ENCODE measurements at regions of chr3 and their contacts with region 1.

Region 1: GRCh38 chr3:129490242-129491045 is 38.0 kb upstream of the RHO start:
- DNase-seq: peak; percentile 71
- ATAC-seq: peak; percentile 95
- H3K4me3 Mint-ChIP-seq: no peak overlapping the region
- H3K27ac Mint-ChIP-seq: no peak overlapping the region
- H3K4me1 Mint-ChIP-seq: no peaks in the 10 kb centered on the region
- H3K27me3 Mint-ChIP-seq: no peaks in the 10 kb centered on the region

Region 2: GRCh38 chr3:129383292-129383860 is 107.1 kb before region 1 on chr3:
- CTCF ChIA-PET with region 1: interaction called, 11 read pairs
- DNase-seq: peak; percentile 66
- ATAC-seq: peak; percentile 94
- H3K4me3 Mint-ChIP-seq: no peak overlapping the region
- H3K27ac Mint-ChIP-seq: no peak overlapping the region
- H3K4me1 Mint-ChIP-seq: no peaks in the 10 kb centered on the region
- H3K27me3 Mint-ChIP-seq: no peaks in the 10 kb centered on the region

Region 3: DNA sequence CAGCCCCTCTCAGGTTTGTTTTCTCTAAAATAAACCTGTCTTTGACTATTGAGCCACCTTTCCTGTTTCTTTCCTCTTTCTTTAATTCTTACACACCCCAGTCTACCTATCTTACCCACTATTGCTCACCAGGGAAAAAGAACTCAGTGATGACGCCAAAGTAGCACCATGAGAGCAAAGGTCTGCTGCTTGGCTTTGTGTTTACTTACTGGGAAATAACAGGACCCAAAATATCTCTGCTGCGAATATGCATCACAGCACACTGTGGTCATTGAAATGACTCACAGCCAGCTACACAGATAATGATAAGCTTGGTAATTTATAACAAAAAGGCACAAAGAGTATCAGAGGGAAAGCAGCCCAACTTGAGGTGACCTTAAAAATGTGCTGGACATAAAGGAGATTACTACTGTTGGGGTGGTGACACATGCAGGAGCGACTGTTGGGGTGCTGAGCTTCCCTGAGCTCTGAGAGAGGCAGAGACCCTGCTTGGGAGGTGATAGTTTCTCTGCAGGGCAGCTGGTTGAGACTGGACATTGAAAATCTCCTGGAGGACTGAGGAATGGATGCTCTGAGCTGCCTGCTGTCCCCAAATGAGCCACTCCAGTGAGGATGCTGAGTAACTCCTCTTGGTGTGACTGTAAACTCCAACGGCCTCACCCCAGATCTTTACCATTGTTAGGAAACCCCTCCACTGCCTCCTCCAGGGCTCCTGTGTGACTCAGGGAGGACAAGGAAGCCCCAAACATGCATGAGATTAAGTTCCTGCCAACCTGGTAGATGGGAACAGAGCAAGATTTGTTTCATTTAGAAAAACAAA is 76.5 kb before region 1 on chr3:
- CTCF ChIA-PET with region 1: no interaction called
- DNase-seq: no peak
- ATAC-seq: no peak
- H3K4me3 Mint-ChIP-seq: no peak overlapping the region
- H3K27ac Mint-ChIP-seq: no peak overlapping the region
- H3K4me1 Mint-ChIP-seq: peaks cover 6% of the 10 kb centered on the region
- H3K27me3 Mint-ChIP-seq: peaks cover 5% of the 10 kb centered on the region

Region 4: GRCh38 chr3:129549412-129550204 is 59.2 kb after region 1 on chr3:
- CTCF ChIA-PET with region 1: no interaction called
- DNase-seq: no peak
- ATAC-seq: no peak
- H3K4me3 Mint-ChIP-seq: no peak overlapping the region
- H3K27ac Mint-ChIP-seq: no peak overlapping the region
- H3K4me1 Mint-ChIP-seq: peaks cover 10% of the 10 kb centered on the region
- H3K27me3 Mint-ChIP-seq: peaks cover 12% of the 10 kb centered on the region

Region 5: GRCh38 chr3:129593595-129594339 is 103.3 kb after region 1 on chr3:
- CTCF ChIA-PET with region 1: interaction called, 10 read pairs
- DNase-seq: peak; percentile 90
- ATAC-seq: peak; percentile 69
- H3K4me3 Mint-ChIP-seq: peak overlapping the region; percentile 41
- H3K27ac Mint-ChIP-seq: peak overlapping the region; percentile 72
- H3K4me1 Mint-ChIP-seq: peaks cover 28% of the 10 kb centered on the region
- H3K27me3 Mint-ChIP-seq: peaks cover 67% of the 10 kb centered on the region

Region 6: DNA sequence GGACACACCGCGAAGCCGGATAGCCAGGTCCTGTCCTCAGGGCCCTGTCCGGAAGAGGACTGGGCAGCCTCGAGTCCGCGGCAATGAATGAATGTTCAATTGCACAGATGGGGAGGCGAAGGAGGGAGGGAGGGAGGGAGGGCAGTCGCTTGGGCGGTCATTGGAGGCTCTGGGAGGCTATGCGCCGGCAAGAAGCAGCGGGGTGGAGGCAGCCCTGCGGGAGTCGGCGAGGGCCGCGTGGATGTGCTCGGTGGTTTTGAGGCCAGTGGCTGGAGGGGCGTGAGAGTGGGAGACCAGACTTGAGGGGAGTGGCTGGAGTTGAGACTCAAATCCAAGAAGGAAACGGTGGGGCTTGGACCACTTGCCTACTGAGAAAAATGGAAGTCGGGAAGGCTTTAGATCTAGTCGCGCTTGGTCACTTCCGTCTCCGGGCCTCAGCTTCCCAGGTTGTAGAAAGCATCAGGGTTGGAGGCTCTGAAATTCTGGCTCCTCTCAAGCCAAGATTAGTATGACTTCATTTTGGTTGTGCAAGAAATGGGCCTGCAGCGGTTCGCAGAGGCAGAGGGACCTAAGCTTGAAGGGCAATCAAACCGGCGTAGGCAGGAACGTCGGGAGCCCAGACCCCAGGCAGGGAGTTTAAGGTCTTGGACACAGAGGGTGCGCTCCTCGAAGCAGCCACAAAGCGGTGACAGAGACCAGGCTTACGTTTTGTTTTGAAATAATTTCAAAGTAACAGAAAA is 137.2 kb after region 1 on chr3:
- CTCF ChIA-PET with region 1: interaction called, 28 read pairs
- DNase-seq: peak; percentile 78
- ATAC-seq: peak; percentile 46
- H3K4me3 Mint-ChIP-seq: peak overlapping the region; percentile 82
- H3K27ac Mint-ChIP-seq: peak overlapping the region; percentile 77
- H3K4me1 Mint-ChIP-seq: peaks cover 20% of the 10 kb centered on the region
- H3K27me3 Mint-ChIP-seq: peaks cover 7% of the 10 kb centered on the region

Region 7: DNA sequence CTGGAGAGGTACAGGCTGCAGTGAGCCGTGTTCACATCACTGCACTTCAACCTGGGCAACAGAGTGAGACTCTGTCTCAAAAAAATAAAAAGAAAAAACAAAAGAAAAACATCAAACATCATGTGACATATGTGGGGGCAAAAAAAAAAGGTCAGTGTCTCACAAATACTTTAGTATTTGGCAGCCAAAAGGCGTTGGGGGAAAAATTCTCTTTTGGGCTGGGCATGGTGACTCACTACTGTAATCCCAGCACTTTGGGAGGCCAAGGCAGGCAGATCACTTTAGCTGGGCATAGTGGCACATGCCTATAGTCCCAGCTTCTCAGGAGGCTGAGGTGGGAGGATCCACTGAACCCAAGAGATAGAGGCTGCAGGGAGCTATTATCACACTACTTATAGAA is 355.5 kb after region 1 on chr3:
- CTCF ChIA-PET with region 1: no interaction called
- DNase-seq: no peak
- ATAC-seq: no peak
- H3K4me3 Mint-ChIP-seq: no peak overlapping the region
- H3K27ac Mint-ChIP-seq: no peak overlapping the region
- H3K4me1 Mint-ChIP-seq: no peaks in the 10 kb centered on the region
- H3K27me3 Mint-ChIP-seq: no peaks in the 10 kb centered on the region

Measured in activated CD8-positive, alpha-beta memory T cell treated with anti-CD3 and anti-CD28 coated beads, Interleukin-2, amount 10 ng/mL, durations not matched to agents 7 days and 5 days (primary cell).